ENCODE measurements at regions of chr5 and their contacts with region 1.

Region 1: DNA sequence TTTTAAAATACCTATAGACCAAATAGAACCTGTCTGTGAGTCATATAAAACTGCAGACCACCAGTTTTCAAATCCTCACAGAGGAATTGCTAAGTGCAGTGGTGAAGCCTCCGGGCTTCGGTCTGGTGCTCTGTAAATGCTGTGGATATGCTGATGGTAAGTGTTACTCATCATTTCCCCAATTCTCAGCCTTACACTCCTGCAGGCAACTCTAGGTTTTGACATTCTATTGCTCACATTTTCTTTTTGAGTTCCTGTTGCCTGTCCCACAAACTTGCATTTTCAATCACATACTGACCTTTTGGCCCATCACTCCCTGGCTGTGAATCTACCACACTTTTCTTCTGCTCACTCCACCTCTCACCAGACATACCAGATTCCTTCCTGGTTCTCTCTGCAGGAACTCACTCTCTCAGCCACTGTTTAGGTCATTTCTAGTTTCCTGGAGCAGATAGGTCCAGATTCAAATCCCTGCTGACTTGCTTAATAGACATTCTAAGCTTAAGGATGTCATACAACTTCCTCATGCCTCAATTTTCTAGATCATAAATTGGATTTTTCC is 192.9 kb downstream of the RAB3C start:
- DNase-seq: no peak
- H3K4me3 Mint-ChIP-seq: no peak overlapping the region
- H3K27ac Mint-ChIP-seq: peak overlapping the region; percentile 2
- H3K4me1 Mint-ChIP-seq: peaks cover 11% of the 10 kb centered on the region
- H3K27me3 Mint-ChIP-seq: peaks cover 8% of the 10 kb centered on the region

Region 2: GRCh38 chr5:58765058-58765457 is 10.7 kb before region 1 on chr5:
- intact Hi-C with region 1: loop called (anchors 1 kb)
- DNase-seq: no peak
- H3K4me3 Mint-ChIP-seq: no peak overlapping the region
- H3K27ac Mint-ChIP-seq: no peak overlapping the region
- H3K4me1 Mint-ChIP-seq: peaks cover 21% of the 10 kb centered on the region
- H3K27me3 Mint-ChIP-seq: no peaks in the 10 kb centered on the region

Region 3: DNA sequence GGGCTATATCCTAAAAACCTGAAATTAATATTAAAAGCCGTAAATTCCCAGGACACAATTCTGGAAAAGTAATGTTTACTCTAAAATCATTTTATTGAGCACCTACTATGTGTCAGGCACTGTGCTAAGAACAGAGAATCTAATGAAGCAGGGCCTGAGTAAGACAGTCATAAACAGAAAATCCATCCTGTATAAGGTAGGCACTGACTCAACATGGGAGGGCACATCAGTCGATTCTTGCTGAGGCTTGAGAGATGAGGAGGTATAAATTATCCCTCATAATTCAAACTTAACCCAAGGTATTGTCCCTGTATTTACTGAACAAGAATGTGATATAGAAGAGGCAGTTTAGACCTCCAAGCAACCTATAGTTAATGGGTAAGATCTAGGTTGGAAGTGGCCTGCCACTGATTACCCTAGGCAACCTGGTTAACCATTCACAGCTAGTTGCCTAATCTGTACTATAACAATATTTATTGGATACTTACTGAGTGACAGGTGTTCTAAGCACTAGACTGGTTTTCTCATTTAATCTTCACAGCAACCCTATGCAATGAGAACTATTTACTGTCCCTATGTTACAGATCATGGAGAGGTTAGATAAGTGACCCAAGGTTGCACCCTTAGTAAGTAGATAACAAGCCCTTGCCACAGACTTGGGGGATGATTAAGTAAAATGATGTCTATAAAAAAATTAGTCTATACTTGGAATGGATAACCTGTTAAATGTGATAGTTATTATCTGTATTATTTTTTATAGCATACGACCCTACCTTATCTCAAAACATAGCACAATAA is 800.1 kb after region 1 on chr5:
- intact Hi-C with region 1: no loop called
- DNase-seq: no peak
- H3K4me3 Mint-ChIP-seq: no peak overlapping the region
- H3K27ac Mint-ChIP-seq: no peak overlapping the region
- H3K4me1 Mint-ChIP-seq: peaks cover 2% of the 10 kb centered on the region
- H3K27me3 Mint-ChIP-seq: peaks cover 12% of the 10 kb centered on the region